ENCODE measurements at regions of chr2 and their contacts with region 1.

Region 1: GRCh38 chr2:43977677-43978375 is 18.0 kb downstream of the LRPPRC start:
- DNase-seq: no peak
- H3K4me3 Mint-ChIP-seq: no peak overlapping the region
- H3K27ac Mint-ChIP-seq: no peak overlapping the region
- H3K4me1 Mint-ChIP-seq: peaks cover 16% of the 10 kb centered on the region
- H3K27me3 Mint-ChIP-seq: no peaks in the 10 kb centered on the region

Region 2: GRCh38 chr2:43848214-43848613 is 129.6 kb before region 1 on chr2:
- intact Hi-C with region 1: no loop called
- DNase-seq: no peak
- H3K4me3 Mint-ChIP-seq: no peak overlapping the region
- H3K27ac Mint-ChIP-seq: no peak overlapping the region
- H3K4me1 Mint-ChIP-seq: no peaks in the 10 kb centered on the region
- H3K27me3 Mint-ChIP-seq: peaks cover 6% of the 10 kb centered on the region

Region 3: GRCh38 chr2:43943809-43944452 is 33.9 kb before region 1 on chr2:
- intact Hi-C with region 1: loop called (anchors 5 kb)
- DNase-seq: no peak
- H3K4me3 Mint-ChIP-seq: no peak overlapping the region
- H3K27ac Mint-ChIP-seq: no peak overlapping the region
- H3K4me1 Mint-ChIP-seq: no peaks in the 10 kb centered on the region
- H3K27me3 Mint-ChIP-seq: no peaks in the 10 kb centered on the region